ENCODE measurements at regions of chr14 and their contacts with region 1.

Region 1: DNA sequence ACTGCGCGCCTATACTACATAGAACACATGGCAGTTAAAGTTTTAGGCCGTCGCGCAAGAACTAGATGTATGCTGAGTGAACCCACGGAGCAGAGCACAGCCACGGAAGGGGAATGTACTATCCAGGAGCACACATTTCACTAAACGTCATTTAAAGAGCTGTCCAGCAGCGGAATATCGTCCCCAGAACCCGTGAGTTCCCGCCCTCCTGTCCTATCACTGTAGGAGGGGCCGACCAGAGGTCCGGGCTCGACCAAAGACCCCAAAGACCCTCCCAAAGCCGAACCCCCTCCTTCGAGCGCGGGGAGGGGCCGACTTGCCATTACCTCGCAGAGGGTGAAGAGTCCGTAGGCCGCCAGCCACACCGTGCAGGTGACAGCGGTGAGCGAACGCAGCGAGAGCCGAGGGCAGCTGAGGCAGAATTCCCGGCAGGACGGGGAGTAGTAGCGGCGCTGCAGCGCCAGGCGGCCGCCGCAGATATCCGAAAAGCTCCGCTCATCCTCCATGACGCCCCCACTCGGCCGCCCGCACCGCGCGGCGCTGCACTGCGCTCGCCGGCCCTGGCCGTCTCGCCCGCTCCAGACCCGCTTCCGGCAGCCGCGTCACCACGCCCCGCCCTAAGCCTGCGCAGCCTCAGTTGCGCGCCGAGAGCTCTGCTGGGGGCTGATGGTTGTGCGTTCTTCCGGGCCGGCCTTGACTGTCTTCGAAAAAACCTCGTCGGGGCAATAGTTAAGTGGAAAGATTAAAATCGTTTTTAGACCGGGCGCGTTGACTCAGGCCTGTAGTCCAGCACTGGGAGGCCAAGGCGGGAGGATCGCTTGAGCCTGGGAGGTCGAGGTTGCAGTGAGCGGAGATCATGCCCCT is at the start of gene PIGH:
- DNase-seq: peak; percentile 81
- H3K4me3 Mint-ChIP-seq: peak within 1 kb of the TSS; percentile 96
- H3K27ac Mint-ChIP-seq: peak within 1 kb of the TSS; percentile 79
- H3K4me1 Mint-ChIP-seq: peaks cover 13% of the 10 kb centered on the region
- H3K27me3 Mint-ChIP-seq: no peaks in the 10 kb centered on the region
- CTCF ChIP-seq: peak; percentile 60
- total RNA-seq, gene PIGH: 13.8 and 18.9 TPM in 2 replicates

Region 2: DNA sequence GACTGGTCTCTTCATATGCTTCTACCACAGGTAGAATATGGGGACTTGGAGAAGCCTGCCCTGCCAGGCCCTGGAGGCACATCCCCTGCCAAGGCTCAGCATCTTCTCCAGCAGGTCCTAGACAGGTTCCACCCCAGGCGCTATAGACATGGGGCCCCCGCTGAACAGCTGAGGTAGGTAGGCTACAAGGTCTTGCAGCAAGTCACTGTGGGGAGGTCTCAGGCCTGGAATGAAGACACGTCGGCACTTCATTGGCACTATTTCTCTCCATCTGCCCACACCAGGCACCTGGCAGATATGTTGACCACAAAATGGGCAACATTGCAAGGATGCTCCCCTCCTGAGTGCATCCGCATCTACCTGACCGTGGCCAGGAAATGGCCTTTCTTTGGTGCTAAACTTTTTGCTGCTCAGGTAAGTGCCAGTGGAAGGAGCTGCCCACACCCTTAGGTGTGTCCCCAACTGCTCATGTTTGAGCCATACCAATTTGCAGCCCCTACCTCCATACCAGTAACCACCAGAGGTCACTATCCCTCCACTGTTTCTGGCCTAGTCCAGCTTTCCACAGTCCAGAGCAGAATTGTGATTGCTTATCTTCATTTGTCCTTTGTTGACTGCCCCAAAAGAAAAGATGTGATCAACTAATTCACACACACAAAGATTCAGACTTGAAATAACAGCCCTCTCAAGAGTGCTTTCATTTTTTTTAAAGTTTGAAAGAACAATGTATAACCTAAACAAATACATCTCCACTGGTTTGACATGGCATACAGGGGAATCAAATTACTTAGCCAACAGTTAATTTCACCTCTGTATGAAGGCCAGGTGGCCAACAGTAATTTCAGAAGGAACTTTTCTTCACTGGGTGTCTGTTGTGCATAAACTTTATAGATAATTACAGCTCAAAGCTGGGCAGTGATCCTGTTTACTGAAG is 16.0 kb before region 1 on chr14:
- CTCF ChIA-PET with region 1: interaction called, 13 read pairs
- POLR2A ChIA-PET with region 1: interaction called, 13 read pairs
- intact Hi-C with region 1: no loop called
- DNase-seq: peak; percentile 66
- H3K4me3 Mint-ChIP-seq: no peak overlapping the region
- H3K27ac Mint-ChIP-seq: no peak overlapping the region
- H3K4me1 Mint-ChIP-seq: no peaks in the 10 kb centered on the region
- H3K27me3 Mint-ChIP-seq: no peaks in the 10 kb centered on the region
- CTCF ChIP-seq: peak; percentile 65

Region 3: DNA sequence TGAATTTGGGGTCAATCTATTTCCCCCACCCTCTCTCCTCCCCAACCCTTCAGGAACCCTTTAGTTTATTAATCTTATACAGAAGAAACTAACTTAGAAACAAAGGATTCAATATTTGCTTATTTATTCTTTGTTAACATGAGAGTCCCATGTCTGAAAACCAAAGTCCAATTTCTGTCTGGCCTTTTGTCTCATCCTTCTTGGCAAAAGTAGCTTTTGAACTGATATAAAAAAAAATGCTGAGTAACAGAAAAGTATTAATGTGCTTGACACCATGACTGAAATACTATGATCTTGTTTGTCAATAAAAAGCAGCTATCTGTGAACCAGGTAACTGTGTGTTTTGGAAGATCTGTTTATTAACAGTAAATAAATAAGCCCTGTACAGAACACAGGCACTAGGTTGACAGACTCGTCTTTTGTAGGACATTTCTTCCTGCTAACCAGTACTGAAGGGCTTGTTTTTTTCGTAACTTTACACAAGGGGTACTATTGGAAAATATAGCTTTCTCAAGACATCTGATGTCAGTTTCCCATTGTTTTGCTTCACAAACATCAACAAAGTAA is 10.6 kb before region 1 on chr14:
- CTCF ChIA-PET with region 1: interaction called, 13 read pairs
- POLR2A ChIA-PET with region 1: interaction called, 15 read pairs
- intact Hi-C with region 1: no loop called
- DNase-seq: no peak
- H3K4me3 Mint-ChIP-seq: no peak overlapping the region
- H3K27ac Mint-ChIP-seq: no peak overlapping the region
- H3K4me1 Mint-ChIP-seq: no peaks in the 10 kb centered on the region
- H3K27me3 Mint-ChIP-seq: no peaks in the 10 kb centered on the region
- CTCF ChIP-seq: no peak

Region 4: GRCh38 chr14:67674481-67675169 is 74.7 kb after region 1 on chr14 and contains the start of gene VTI1B:
- CTCF ChIA-PET with region 1: interaction called, 3 read pairs
- POLR2A ChIA-PET with region 1: interaction called, 19 read pairs
- intact Hi-C with region 1: no loop called
- DNase-seq: peak; percentile 67
- H3K4me3 Mint-ChIP-seq: peak within 1 kb of the TSS; percentile 86
- H3K27ac Mint-ChIP-seq: peak within 1 kb of the TSS; percentile 88
- H3K4me1 Mint-ChIP-seq: peaks cover 27% of the 10 kb centered on the region
- H3K27me3 Mint-ChIP-seq: no peaks in the 10 kb centered on the region
- CTCF ChIP-seq: no peak
- total RNA-seq, gene VTI1B: 57.5 and 84.3 TPM in 2 replicates

Region 5: GRCh38 chr14:67695394-67695949 is 95.5 kb after region 1 on chr14 and contains the start of gene RDH11:
- CTCF ChIA-PET with region 1: interaction called, 5 read pairs
- POLR2A ChIA-PET with region 1: interaction called, 13 read pairs
- intact Hi-C with region 1: loop called (anchors 2 kb)
- DNase-seq: peak; percentile 95
- H3K4me3 Mint-ChIP-seq: peak within 1 kb of the TSS; percentile 81
- H3K27ac Mint-ChIP-seq: peak within 1 kb of the TSS; percentile 46
- H3K4me1 Mint-ChIP-seq: peaks cover 7% of the 10 kb centered on the region
- H3K27me3 Mint-ChIP-seq: no peaks in the 10 kb centered on the region
- CTCF ChIP-seq: no peak
- total RNA-seq, gene RDH11: 40.9 and 53.5 TPM in 2 replicates

Region 6: DNA sequence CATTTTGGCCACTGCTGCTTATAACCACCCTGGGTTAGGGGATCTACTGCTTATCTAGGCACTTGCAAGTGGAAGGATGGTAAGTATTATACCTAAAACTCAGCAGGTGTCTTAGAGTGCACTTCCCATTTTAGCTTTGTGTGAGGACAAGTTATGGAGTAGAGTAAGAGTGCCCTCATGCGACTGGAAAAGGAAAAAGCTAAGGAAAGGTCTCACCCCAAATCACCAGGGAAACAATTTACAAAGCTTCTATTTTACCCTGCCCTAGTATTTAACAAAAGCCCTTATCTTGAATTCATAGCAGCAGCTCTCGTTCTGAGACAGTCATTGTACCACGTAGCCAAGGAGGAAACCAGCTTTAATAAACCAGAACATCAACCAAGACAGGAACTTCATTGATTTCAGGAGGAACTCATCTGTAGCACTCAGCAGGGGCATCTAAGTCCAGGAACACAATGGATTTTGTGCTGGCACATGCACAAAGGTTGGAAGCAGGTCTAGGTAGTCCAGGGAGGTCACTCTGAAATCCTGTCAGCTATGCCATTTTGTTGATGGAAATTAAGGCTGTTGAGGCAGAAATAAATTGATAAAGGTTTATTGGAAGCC is 104.7 kb after region 1 on chr14:
- CTCF ChIA-PET with region 1: interaction called, 11 read pairs
- POLR2A ChIA-PET with region 1: interaction called, 16 read pairs
- intact Hi-C with region 1: no loop called
- DNase-seq: peak; percentile 70
- H3K4me3 Mint-ChIP-seq: no peak overlapping the region
- H3K27ac Mint-ChIP-seq: no peak overlapping the region
- H3K4me1 Mint-ChIP-seq: peaks cover 9% of the 10 kb centered on the region
- H3K27me3 Mint-ChIP-seq: no peaks in the 10 kb centered on the region
- CTCF ChIP-seq: peak; percentile 75

Region 7: DNA sequence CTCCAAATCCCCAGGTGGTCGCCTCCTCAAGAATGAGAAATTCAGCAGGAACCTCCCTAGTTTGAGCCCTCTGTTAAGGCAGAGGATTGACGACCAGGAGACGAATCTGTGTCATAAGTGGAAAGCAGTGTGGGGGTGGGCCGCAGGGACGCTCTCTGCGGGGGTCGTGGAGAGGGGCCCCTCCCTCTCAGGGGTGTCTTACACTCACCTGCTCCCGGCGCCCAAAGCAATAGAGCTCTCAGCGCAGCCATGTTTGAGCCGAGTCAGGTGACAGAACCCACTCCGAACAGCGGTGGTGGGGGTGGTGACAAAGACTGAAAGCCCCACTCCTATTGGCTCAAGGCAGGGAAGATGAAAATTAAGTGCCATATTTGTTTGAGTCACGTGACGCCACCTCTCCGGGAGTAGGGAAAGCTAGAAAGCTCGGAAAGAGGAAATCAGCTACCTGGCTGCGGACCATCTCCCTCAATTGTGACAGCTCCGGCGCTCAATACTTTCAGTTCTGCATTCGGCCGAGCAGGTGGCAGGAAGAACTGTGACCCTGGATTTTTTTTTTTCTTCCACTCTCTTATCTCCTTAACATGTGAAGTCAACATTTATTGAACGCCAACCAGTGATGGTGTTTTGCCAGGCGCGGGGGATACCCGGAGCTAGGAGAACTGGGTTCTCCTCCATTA is 216.5 kb after region 1 on chr14 and contains the start of gene ZFYVE26:
- CTCF ChIA-PET with region 1: no interaction called
- POLR2A ChIA-PET with region 1: no interaction called
- intact Hi-C with region 1: loop called (anchors 5 kb)
- DNase-seq: peak; percentile 97
- H3K4me3 Mint-ChIP-seq: peak within 1 kb of the TSS; percentile 94
- H3K27ac Mint-ChIP-seq: peak within 1 kb of the TSS; percentile 89
- H3K4me1 Mint-ChIP-seq: peaks cover 24% of the 10 kb centered on the region
- H3K27me3 Mint-ChIP-seq: no peaks in the 10 kb centered on the region
- CTCF ChIP-seq: no peak
- total RNA-seq, gene ZFYVE26: 11.9 and 18.1 TPM in 2 replicates

Region 8: GRCh38 chr14:67908052-67908754 is 308.3 kb after region 1 on chr14:
- CTCF ChIA-PET with region 1: no interaction called
- POLR2A ChIA-PET with region 1: no interaction called
- intact Hi-C with region 1: no loop called
- DNase-seq: peak; percentile 8
- H3K4me3 Mint-ChIP-seq: no peak overlapping the region
- H3K27ac Mint-ChIP-seq: no peak overlapping the region
- H3K4me1 Mint-ChIP-seq: no peaks in the 10 kb centered on the region
- H3K27me3 Mint-ChIP-seq: no peaks in the 10 kb centered on the region
- CTCF ChIP-seq: no peak

Measured in MCF 10A (cell line).